Aorta (tissue), 5 donors: ENCODE measurements at regions of chr7 and their contacts with region 1.

Region 1: DNA sequence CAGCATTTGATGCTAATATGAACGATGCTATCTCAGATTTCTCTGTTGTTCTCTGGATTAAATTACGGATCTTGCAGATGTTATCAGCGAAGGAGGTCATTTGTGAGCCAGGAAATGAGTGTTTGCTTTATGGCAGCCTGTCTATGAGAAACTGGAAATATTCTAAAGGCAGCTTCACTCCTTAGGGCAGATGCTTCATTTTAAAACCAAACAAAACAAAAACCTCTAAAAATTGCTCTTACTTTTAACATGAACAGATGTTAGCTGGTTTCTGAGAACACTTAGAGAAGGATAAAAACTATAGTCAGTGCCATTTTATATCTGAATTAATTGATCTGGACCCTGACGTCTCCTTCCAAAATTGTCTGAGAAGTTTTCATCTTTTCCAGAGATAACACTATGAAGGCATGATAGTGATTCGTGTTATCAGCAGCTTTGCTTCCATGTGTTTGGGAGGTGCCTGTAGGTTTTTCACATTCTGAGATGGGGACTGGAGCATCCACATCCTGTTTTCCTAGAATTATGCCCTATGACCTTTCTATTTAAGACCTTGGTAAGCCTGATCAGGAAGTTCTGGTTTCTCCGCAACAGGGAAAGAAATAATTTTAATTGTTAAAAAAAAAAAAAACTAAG is 53.1 kb downstream of the CPED1 start:
- DNase-seq: no peak
- ATAC-seq: no peak
- H3K4me3 ChIP-seq: no peak overlapping the region
- H3K27ac ChIP-seq: no peak overlapping the region
- H3K4me1 ChIP-seq: peaks cover 2 to 5% of the 10 kb centered on the region in 2 donors
- H3K27me3 ChIP-seq: no peaks in the 10 kb centered on the region

Region 2: GRCh38 chr7:120966961-120967360 is 74.7 kb before region 1 on chr7:
- intact Hi-C with region 1: no loop called
- DNase-seq: no peak
- ATAC-seq: no peak
- H3K4me3 ChIP-seq: no peak overlapping the region
- H3K27ac ChIP-seq: no peak overlapping the region
- H3K4me1 ChIP-seq: no peaks in the 10 kb centered on the region
- H3K27me3 ChIP-seq: no peaks in the 10 kb centered on the region

Region 3: GRCh38 chr7:121006711-121007315 is 34.8 kb before region 1 on chr7:
- intact Hi-C with region 1: loop called in 1 of 2 experiments (anchors 5 kb)
- DNase-seq: no peak
- ATAC-seq: no peak
- H3K4me3 ChIP-seq: no peak overlapping the region
- H3K27ac ChIP-seq: no peak overlapping the region
- H3K4me1 ChIP-seq: peaks cover 5 to 12% of the 10 kb centered on the region in 2 donors
- H3K27me3 ChIP-seq: no peaks in the 10 kb centered on the region